Testis (tissue), 5 donors: ENCODE measurements at regions of chr3 and their contacts with region 1.

Region 1: DNA sequence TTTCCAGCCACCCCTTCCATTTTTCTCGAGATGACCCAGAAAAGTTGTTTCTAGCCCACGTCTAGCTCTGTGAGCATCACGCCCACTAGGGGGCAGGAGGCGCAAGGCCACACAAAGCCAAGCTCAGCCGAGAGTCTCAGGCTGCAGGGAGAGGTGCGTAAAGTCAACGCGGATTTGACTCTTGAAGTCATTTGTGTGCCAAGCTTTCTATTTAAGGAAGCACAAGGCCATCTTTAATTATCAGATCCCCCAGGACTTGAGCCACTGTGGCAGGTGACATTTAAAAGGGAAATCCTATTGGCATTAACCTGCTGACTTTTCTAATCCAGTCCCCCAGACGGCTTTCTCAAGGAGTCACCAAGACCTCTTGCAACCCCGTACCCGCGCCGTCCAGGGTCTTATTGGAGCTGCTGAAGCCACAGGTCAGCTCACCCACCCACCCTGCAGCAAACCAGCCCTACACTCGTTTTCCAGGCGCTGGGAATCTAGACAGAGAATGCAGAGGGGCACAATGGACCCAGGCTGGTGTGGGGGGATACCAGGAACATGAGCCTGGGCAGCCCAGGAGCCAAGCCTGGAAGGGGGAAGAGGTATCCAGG is 62.1 kb downstream of the CAPN7 start:
- DNase-seq: peak; percentile 93
- H3K4me3 ChIP-seq: no peak overlapping the region
- H3K27ac ChIP-seq: peak overlapping the region; percentile 52 to 69
- H3K4me1 ChIP-seq: peaks cover 41% of the 10 kb centered on the region
- H3K27me3 ChIP-seq: no peaks in the 10 kb centered on the region
- CTCF ChIP-seq: peak; percentile 89 to 95 (median 92)
- POLR2A ChIP-seq: no peak

Region 2: DNA sequence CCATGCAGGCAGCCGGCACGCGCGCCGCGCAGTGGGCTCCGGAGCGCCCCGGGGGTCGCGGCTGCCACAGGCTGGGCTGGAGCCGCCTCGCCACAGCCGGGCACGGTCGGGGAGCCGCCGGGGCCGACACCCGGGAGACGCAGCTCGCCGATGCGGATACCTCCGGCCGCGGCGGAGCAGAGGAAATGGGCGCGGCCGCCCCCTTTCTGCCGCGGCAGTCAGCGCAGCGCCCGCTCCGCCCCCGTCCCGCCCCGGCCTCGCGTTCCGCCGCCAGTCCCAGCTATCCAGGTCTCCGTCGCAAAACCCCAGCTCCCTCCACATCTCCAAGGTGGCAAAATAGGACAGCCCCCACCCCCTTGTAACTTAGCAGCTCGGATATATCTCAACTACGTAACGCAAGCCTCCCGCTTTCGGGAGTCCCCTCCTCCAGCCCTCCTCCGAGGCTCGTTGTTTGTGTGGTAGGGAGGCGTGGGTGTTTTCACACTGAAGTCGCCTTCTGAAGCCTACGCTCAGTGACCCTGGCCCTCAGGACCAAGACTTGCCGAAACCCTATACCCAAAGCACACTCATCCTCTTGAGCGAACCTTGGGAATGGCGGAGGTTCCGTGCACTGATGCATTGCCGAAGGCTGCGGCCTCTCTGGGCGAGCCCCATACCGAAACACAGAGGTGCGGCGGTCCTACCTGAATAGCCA is 64.4 kb after region 1 on chr3 and contains the start of gene SH3BP5:
- intact Hi-C with region 1: loop called (anchors 5 kb)
- DNase-seq: peak; percentile 80
- H3K4me3 ChIP-seq: peak within 1 kb of the TSS; percentile 82 to 83
- H3K27ac ChIP-seq: peak within 1 kb of the TSS; percentile 78 to 92
- H3K4me1 ChIP-seq: peaks cover 35% of the 10 kb centered on the region
- H3K27me3 ChIP-seq: no peaks in the 10 kb centered on the region
- CTCF ChIP-seq: peak; percentile 60 to 76 (median 76)
- POLR2A ChIP-seq: no peak
- total RNA-seq, gene SH3BP5: 102 to 126 TPM

Region 3: DNA sequence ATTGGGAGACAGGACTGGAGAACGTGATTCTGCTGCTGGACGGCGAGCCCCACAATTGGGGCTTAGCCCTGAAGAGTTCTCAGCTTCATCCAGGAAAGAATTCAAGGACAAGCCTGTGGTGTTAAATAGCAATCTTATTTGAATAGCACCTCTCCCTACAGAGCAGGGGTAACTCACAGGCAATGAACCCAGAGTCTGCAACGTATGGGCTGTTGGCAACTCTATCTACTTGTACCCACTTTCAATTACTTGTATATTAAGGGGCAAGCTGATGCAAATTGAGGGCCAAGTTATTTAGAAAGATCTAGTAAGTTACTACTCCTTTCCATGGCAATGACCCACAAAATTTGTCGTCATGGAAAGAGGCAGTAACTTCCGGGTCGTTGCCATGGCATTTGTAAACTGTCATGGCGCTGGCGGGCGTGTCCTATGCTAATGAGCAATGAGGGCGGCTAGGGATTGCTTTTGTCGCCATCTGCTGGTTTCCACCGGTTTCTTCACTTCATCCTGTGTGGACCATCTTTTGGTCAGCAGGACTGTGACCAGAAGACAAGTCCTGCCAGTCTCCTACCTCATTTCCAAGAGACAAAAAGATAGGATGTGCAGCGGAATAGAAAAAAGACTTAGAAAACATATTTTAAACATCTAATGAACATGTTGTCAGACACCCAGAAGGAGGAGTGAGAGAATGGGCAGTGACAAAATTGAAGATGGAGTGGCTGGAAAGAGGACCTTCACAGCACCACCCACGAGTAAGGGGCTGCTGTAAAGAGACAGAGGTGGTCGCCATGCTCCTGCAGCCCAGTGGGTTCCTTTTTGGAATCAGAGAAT is 110.0 kb after region 1 on chr3:
- intact Hi-C with region 1: loop called (anchors 10 kb)
- DNase-seq: peak; percentile 98
- H3K4me3 ChIP-seq: peak overlapping the region in 1 of 2 donors; percentile 3
- H3K27ac ChIP-seq: peak overlapping the region; percentile 45 to 66
- H3K4me1 ChIP-seq: peaks cover 10% of the 10 kb centered on the region
- H3K27me3 ChIP-seq: no peaks in the 10 kb centered on the region
- CTCF ChIP-seq: peak; percentile 79 to 98 (median 94)
- POLR2A ChIP-seq: no peak